ENCODE measurements at regions of chr19 and their contacts with region 1.

Region 1: DNA sequence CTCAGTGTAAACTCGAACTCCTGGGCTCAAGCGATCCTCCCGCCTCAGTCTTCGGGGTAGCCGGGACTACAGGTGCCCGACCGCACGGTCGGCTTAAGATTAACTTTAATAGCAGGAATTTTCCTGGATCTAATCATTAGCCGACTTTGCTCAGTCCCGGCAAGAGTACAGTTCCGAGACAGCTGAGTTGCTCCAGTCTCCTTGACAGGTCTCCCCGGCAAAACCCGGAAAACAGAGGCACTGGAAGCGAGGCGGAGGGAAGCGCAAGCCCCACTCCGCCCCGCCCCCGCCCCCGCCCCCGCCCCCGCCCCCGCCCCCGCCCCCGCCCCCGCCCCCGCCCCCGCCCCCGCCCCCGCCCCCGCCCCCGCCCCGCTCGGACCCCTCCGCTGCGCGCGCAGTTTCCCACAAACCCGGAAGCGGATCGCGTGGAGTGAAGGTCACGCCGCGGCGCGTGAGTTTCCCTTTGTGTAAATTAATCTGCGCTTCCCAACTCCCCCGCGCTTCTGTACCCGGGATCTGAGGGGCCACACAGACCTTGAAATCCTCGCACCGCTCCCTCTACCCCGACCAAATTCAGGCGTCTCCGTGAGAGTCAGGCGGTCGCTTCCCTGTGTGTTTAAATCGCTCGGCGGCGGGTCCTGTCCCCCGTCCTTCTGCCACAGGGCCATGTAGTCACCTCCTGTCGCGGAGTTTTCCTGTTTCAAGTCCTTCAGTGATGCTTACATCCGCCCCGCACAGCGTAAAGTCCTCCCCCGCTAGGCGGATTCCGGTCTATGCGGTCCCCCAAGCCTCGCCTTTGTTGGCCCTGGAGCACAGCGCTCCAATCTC is at the start of gene ZNF480:
- DNase-seq: peak; percentile 92
- H3K4me3 ChIP-seq: peak within 1 kb of the TSS; percentile 64 to 93 (median 84)
- H3K27ac ChIP-seq: peak within 1 kb of the TSS; percentile 89 to 95 (median 92)
- H3K4me1 ChIP-seq: peaks cover 0 to 19% (median 12%) of the 10 kb centered on the region in 4 donors
- H3K27me3 ChIP-seq: no peaks in the 10 kb centered on the region
- CTCF ChIP-seq: peak in 2 of 4 experiments; percentile 13 to 15
- EP300 ChIP-seq: no peak
- POLR2A ChIP-seq: peak; percentile 42 to 61
- total RNA-seq, gene ZNF480: 7.5 to 11.2 (median 8.1) TPM

Region 2: DNA sequence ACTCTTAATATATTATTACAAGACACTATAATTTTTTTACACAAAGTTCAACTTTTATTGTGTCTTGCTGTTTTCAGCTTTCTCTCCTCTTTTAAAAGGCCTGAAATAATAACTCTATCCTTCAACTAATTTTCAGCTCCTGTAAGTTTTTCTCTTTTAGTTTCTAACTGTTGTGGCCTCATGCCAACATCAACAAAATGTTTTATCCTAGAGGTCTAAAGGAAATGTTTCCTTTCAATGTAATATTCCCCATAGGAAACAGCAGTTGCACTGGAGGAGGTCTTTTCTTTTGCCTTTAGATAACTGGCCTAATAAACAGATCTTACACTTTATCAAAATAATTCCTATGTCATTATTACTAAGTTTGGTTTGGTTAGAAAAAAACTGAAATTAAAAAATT is 148.7 kb before region 1 on chr19:
- intact Hi-C with region 1: no loop called
- DNase-seq: no peak
- H3K4me3 ChIP-seq: no peak overlapping the region
- H3K27ac ChIP-seq: no peak overlapping the region
- H3K4me1 ChIP-seq: no peaks in the 10 kb centered on the region
- H3K27me3 ChIP-seq: no peaks in the 10 kb centered on the region
- CTCF ChIP-seq: no peak
- EP300 ChIP-seq: no peak
- POLR2A ChIP-seq: no peak

Region 3: GRCh38 chr19:52269338-52270261 is 27.4 kb before region 1 on chr19 and contains the start of gene ZNF766:
- intact Hi-C with region 1: loop called (anchors 1 kb)
- DNase-seq: peak; percentile 99
- H3K4me3 ChIP-seq: peak within 1 kb of the TSS; percentile 69 to 100 (median 94)
- H3K27ac ChIP-seq: peak within 1 kb of the TSS; percentile 95 to 100 (median 98)
- H3K4me1 ChIP-seq: peaks cover 0 to 22% (median 19%) of the 10 kb centered on the region in 4 donors
- H3K27me3 ChIP-seq: no peaks in the 10 kb centered on the region
- CTCF ChIP-seq: no peak
- EP300 ChIP-seq: no peak
- POLR2A ChIP-seq: peak; percentile 78 to 82
- total RNA-seq, gene ZNF766: 5.5 to 11.0 (median 9.9) TPM

Region 4: GRCh38 chr19:52369559-52370340 is 72.8 kb after region 1 on chr19 and contains the start of gene ZNF880:
- intact Hi-C with region 1: no loop called
- DNase-seq: peak; percentile 96
- H3K4me3 ChIP-seq: peak within 1 kb of the TSS; percentile 64 to 79 (median 71)
- H3K27ac ChIP-seq: peak within 1 kb of the TSS; percentile 90 to 95 (median 90)
- H3K4me1 ChIP-seq: peaks cover 0 to 8% (median 4%) of the 10 kb centered on the region in 4 donors
- H3K27me3 ChIP-seq: no peaks in the 10 kb centered on the region
- CTCF ChIP-seq: no peak
- EP300 ChIP-seq: no peak
- POLR2A ChIP-seq: peak in 1 of 2 donors; percentile 43
- total RNA-seq, gene ZNF880: 21.6 to 24.8 (median 23.0) TPM

Region 5: DNA sequence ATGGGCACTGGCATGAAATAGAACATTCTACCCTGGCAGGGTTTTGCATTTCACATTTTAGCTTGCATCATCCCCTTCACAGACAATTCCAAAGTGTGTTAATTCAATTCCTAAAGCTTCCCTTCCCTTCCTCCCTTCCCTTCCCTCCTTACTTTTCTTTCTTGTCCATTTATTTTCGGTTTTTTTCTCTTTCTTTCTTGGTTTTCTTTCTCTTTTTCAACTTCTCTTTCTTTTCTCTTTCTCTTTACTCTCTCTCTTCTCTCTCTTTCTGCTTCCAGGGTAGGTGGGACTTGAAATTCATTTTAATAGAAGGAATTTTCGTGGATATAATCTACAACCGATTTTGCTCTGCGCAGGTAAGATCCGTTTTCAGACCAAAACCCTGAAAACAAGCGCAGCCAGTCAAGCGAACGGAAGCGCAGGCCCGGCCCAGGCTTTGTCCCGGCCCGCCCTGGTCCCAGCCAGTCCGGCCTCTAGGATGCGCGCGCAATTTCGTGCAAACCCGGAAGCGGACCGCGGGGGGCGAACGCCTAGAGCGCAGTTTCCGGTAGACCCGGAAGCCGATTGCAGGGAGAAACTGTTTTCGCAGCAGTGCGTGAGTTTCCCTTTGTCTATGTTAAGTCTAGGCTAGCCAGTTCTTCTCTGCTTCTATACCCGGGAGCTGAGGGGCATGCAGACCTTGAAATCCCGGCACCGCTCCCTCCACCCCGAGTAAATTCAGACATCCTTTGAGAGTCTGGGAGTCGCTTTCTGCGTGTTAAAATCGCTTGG is 100.5 kb after region 1 on chr19 and contains the start of gene ZNF528:
- intact Hi-C with region 1: loop called (anchors 5 kb)
- DNase-seq: peak; percentile 97
- H3K4me3 ChIP-seq: peak within 1 kb of the TSS; percentile 52 to 72 (median 66)
- H3K27ac ChIP-seq: peak within 1 kb of the TSS; percentile 63 to 81 (median 68)
- H3K4me1 ChIP-seq: peaks cover 0 to 19% (median 18%) of the 10 kb centered on the region in 4 donors
- H3K27me3 ChIP-seq: no peaks in the 10 kb centered on the region
- CTCF ChIP-seq: no peak
- EP300 ChIP-seq: peak in 1 of 4 donors; percentile 45
- POLR2A ChIP-seq: peak in 1 of 2 donors; percentile 38
- total RNA-seq, gene ZNF528: 15.5 to 27.4 (median 20.2) TPM